HepG2 (cell line): ENCODE measurements at regions of chr17 and their contacts with region 1.

Region 1: GRCh38 chr17:72661093-72661944 is 431.2 kb downstream of the SLC39A11 start:
- DNase-seq: peak; percentile 98
- ATAC-seq: peak; percentile 89
- H3K4me3 ChIP-seq: peak overlapping the region in 1 of 3 experiments; percentile 36; a peak in 2 of 6 replicates
- H3K27ac ChIP-seq: peak overlapping the region; percentile 50
- H3K4me1 ChIP-seq: peaks cover 37% of the 10 kb centered on the region
- H3K27me3 ChIP-seq: no peaks in the 10 kb centered on the region
- CTCF ChIP-seq: peak; percentile 78
- EP300 ChIP-seq: peak in 1 of 2 experiments; percentile 78; a peak in 3 of 4 replicates
- POLR2A ChIP-seq: 0 out of 4 replicates have a peak, but pooled peaks of 1 of the 2 experiments have one; percentile 29
- RAD21 ChIP-seq: peak; percentile 46; the same call in 1 of the 2 replicates

Region 2: GRCh38 chr17:72640415-72641165 is 20.7 kb before region 1 on chr17:
- CTCF ChIA-PET with region 1: no interaction called
- POLR2A ChIA-PET with region 1: no interaction called
- in situ Hi-C with region 1: no loop called
- intact Hi-C with region 1: no loop called
- DNase-seq: no peak
- ATAC-seq: no peak
- H3K4me3 ChIP-seq: no peak overlapping the region
- H3K27ac ChIP-seq: no peak overlapping the region
- H3K4me1 ChIP-seq: peaks cover 28% of the 10 kb centered on the region
- H3K27me3 ChIP-seq: no peaks in the 10 kb centered on the region
- CTCF ChIP-seq: no peak
- EP300 ChIP-seq: no peak
- POLR2A ChIP-seq: no peak
- RAD21 ChIP-seq: no peak

Region 3: GRCh38 chr17:72677108-72677507 is 15.8 kb after region 1 on chr17:
- CTCF ChIA-PET with region 1: no interaction called
- POLR2A ChIA-PET with region 1: no interaction called
- in situ Hi-C with region 1: no loop called
- intact Hi-C with region 1: no loop called
- DNase-seq: peak; percentile 43
- ATAC-seq: no peak; the same call in 1 of the 3 replicates
- H3K4me3 ChIP-seq: no peak overlapping the region
- H3K27ac ChIP-seq: no peak overlapping the region
- H3K4me1 ChIP-seq: peaks cover 32% of the 10 kb centered on the region
- H3K27me3 ChIP-seq: no peaks in the 10 kb centered on the region
- CTCF ChIP-seq: no peak
- EP300 ChIP-seq: no peak
- POLR2A ChIP-seq: no peak
- RAD21 ChIP-seq: no peak

Region 4: DNA sequence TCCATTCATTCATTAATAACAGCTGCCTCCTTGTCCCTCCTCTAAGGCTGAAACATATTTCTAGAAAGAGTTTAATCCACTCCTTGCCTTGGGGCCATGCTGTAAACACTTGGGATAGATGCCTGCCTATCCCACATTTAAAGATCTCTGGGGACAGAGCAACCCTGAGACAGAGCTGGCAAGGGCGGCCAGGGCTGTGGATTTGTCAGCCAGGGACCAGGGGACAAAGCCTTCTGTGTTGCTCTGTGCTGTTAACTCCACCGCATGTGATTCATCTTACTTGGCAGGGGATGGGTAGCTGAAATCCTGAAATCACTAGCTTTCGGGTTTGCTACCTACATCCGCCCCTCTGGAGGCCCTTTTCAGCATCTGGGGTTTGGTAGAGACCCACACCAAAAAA is 38.2 kb after region 1 on chr17:
- CTCF ChIA-PET with region 1: no interaction called
- POLR2A ChIA-PET with region 1: interaction called, 3 read pairs
- in situ Hi-C with region 1: no loop called
- intact Hi-C with region 1: loop called (anchors 1 kb)
- DNase-seq: no peak
- ATAC-seq: no peak
- H3K4me3 ChIP-seq: no peak overlapping the region
- H3K27ac ChIP-seq: no peak overlapping the region
- H3K4me1 ChIP-seq: peaks cover 46% of the 10 kb centered on the region
- H3K27me3 ChIP-seq: no peaks in the 10 kb centered on the region
- CTCF ChIP-seq: no peak
- EP300 ChIP-seq: no peak
- POLR2A ChIP-seq: no peak
- RAD21 ChIP-seq: no peak

Region 5: GRCh38 chr17:72715906-72716572 is 54.7 kb after region 1 on chr17:
- CTCF ChIA-PET with region 1: no interaction called
- POLR2A ChIA-PET with region 1: interaction called, 3 read pairs
- in situ Hi-C with region 1: no loop called
- intact Hi-C with region 1: loop called (anchors 5 kb)
- DNase-seq: peak; percentile 94
- ATAC-seq: peak; percentile 74
- H3K4me3 ChIP-seq: no peak overlapping the region
- H3K27ac ChIP-seq: peak overlapping the region; percentile 47
- H3K4me1 ChIP-seq: peaks cover 29% of the 10 kb centered on the region
- H3K27me3 ChIP-seq: no peaks in the 10 kb centered on the region
- CTCF ChIP-seq: no peak
- EP300 ChIP-seq: peak; percentile 39 to 79; a peak in 3 of 4 replicates
- POLR2A ChIP-seq: no peak
- RAD21 ChIP-seq: no peak